ENCODE measurements at regions of chr5 and their contacts with region 1.

Region 1: GRCh38 chr5:95646554-95647431 is at the start of gene RFESD:
- DNase-seq: peak; percentile 99 to 100
- H3K4me3 ChIP-seq: peak within 1 kb of the TSS in 2 of 3 donors; percentile 42 to 45
- H3K27ac ChIP-seq: peak within 1 kb of the TSS; percentile 91 to 96 (median 95)
- H3K4me1 ChIP-seq: peaks cover 3 to 14% of the 10 kb centered on the region in 2 donors
- H3K27me3 ChIP-seq: no peaks in the 10 kb centered on the region
- CTCF ChIP-seq: peak in 4 of 6 experiments; percentile 10 to 24 (median 18)
- POLR2A ChIP-seq: peak; percentile 68 to 97
- total RNA-seq, gene RFESD: 0.63 to 3.7 (median 2.5) TPM

Region 2: DNA sequence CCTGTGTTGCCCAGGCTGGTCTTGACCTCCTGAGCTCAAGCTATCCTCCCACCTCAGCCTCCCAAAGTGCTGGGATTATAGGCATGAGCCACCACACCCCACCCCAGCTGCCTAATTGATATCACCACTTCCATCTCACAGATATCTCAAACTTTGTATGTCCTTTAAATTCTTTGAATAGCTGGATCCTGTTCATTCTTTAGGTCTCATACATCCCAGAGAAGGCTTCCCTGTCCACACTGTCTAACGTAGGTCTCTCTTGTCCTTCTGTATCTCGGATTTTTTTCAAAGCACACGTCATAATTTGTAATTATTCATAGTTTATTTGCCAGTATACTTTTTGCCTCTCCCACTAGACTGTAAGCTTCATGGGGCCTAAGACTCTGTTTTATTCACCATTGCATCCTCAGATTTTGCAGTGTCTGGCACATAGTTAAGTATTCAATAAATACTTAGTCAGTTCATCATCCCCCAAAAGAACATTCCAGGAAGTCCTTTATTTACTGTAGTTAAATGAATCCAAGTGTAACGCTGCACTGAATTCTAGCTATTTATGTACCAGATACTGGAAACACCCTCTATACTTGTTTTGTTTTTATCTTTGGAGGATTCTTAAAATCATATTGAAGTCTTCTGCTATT is 81.4 kb before region 1 on chr5:
- intact Hi-C with region 1: no loop called
- DNase-seq: no peak
- H3K4me3 ChIP-seq: no peak overlapping the region
- H3K27ac ChIP-seq: no peak overlapping the region
- H3K4me1 ChIP-seq: no peaks in the 10 kb centered on the region
- H3K27me3 ChIP-seq: no peaks in the 10 kb centered on the region
- CTCF ChIP-seq: no peak
- POLR2A ChIP-seq: no peak

Region 3: DNA sequence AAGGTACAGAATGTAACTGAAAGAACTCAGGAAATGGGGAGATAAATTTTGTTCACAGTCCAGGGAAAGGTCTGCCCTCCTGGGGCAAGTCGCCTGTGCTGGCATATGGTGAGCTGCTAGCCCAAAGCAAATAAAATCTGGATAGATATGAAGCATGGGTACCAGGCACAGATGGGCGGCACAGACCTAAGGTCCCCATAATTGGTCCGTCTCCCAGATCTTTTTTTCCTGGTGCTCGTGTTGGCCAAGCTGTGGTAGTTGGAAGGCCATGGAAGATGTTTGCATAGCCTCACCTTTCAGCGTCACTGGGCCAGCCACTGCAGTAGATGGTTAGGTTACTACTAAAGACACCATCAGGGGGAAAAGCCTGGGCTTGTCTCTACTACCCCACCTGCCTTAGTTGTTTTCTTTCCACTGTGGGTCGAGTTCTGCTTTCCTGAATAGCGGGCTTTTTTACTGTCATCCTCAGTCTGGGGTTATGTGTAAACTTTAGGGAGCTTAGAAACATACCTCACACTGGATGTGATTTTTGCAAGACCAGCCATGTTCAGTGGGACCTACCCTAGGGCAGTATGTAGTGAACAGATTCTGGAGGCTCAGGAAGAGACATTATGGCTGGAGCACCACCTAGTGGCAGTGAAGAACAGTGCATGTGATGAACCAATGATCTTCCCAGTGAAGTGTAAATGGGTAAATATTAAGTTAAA is 199.9 kb after region 1 on chr5:
- intact Hi-C with region 1: loop called (anchors 5 kb)
- DNase-seq: peak; percentile 61 to 71
- H3K4me3 ChIP-seq: no peak overlapping the region
- H3K27ac ChIP-seq: no peak overlapping the region
- H3K4me1 ChIP-seq: peaks cover 8 to 24% of the 10 kb centered on the region in 2 donors
- H3K27me3 ChIP-seq: no peaks in the 10 kb centered on the region
- CTCF ChIP-seq: peak; percentile 78 to 96 (median 92)
- POLR2A ChIP-seq: no peak

Region 4: GRCh38 chr5:96336351-96336985 is 689.7 kb after region 1 on chr5:
- intact Hi-C with region 1: loop called (anchors 10 kb)
- DNase-seq: peak; percentile 75 to 76
- H3K4me3 ChIP-seq: no peak overlapping the region
- H3K27ac ChIP-seq: peak overlapping the region in 2 of 3 donors; percentile 6 to 7
- H3K4me1 ChIP-seq: peaks cover 5 to 24% of the 10 kb centered on the region in 2 donors
- H3K27me3 ChIP-seq: no peaks in the 10 kb centered on the region
- CTCF ChIP-seq: peak; percentile 48 to 91 (median 85)
- POLR2A ChIP-seq: no peak

Region 5: DNA sequence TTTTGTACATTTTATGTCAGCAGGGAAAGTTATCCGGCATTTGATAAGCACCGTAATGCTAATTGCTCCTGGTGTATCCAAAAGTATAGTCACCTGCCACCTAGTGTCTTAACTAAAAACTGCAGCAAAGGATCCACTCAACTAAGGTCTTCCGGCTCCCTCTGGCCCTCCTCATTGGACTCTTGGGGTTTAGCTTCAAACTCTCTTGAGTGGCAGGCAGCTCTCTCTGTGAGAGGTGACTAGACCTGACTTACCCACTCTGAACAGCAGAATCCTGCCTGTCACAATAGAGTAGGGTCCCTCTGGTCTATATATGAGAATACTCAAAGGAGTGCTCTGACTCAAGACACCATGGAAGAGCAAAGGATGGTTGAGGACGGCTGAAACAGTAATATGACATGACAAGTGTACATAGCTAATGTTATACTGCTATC is 955.0 kb after region 1 on chr5:
- intact Hi-C with region 1: loop called (anchors 10 kb)
- DNase-seq: peak; percentile 19 to 28
- H3K4me3 ChIP-seq: no peak overlapping the region
- H3K27ac ChIP-seq: no peak overlapping the region
- H3K4me1 ChIP-seq: no peaks in the 10 kb centered on the region
- H3K27me3 ChIP-seq: no peaks in the 10 kb centered on the region
- CTCF ChIP-seq: peak; percentile 42 to 83 (median 66)
- POLR2A ChIP-seq: no peak

Measured in thyroid gland (tissue), 4 donors.